ENCODE measurements at regions of chr1 and their contacts with region 1.

Region 1: GRCh38 chr1:23691499-23692307 is at the start of gene RPL11:
- DNase-seq: peak; percentile 84 to 88
- H3K4me3 ChIP-seq: peak within 1 kb of the TSS; percentile 82 to 100 (median 92)
- H3K27ac ChIP-seq: peak within 1 kb of the TSS; percentile 93
- H3K4me1 ChIP-seq: peaks cover 0 to 13% (median 6%) of the 10 kb centered on the region in 4 experiments; a peak in 4 of 7 replicates
- H3K27me3 ChIP-seq: no peaks in the 10 kb centered on the region
- CTCF ChIP-seq: peak; percentile 67 to 77 (median 76)
- EP300 ChIP-seq: no peak
- POLR2A ChIP-seq: peak; percentile 97 to 99
- RAD21 ChIP-seq: no peak
- total RNA-seq, gene RPL11: 1,426 and 1,499 TPM in 2 replicates

Region 2: DNA sequence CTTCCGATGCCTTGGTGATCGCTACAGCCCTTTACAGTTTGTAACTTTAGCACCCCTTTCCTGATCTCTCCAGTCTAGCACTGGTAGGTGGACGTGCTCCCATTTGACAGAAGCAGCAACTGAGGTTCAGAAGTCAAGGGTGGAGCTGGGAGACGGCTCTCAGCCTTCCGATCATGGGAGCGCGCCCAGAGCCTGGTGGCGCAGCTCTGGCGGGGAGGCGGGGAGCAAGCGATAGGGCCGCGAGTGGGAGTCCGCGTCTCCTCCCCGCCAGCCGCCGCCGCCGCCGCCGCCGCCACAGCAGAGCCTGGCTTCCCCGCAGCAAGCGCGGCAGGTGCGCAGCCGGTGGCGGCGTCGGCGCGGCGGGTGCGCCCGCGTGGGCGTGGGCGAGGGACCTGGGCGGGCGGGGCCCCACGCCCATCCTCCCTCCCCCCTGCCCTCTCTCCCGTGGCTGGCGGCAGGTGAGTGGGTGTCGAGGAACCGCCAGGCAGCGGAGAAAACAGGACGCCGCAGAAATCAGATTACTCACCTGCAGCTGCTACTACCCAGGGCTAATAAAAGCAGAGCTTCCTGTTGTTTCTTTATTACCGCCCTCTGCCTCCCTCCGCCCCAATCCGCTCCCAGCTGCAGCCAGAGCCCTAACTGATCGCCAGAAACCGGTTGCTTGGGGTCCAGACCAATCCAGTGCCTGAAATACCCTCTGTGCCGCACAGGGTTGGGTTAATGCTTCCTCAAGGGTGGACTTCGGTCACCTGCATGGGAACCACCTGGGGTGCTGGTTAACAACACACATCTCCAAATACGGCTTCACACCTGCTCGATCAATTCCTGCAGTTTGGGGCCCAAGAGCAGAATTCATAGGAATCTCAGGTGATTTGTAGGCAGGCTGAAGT is 72.2 kb before region 1 on chr1:
- CTCF ChIA-PET with region 1: interaction called, 3 read pairs
- POLR2A ChIA-PET with region 1: interaction called, 10 read pairs
- DNase-seq: peak in 1 of 2 experiments; percentile 72
- H3K4me3 ChIP-seq: peak overlapping the region; percentile 6 to 55 (median 28)
- H3K27ac ChIP-seq: no peak overlapping the region
- H3K4me1 ChIP-seq: peaks cover 4 to 17% (median 9%) of the 10 kb centered on the region in 4 experiments; a peak in 6 of 7 replicates
- H3K27me3 ChIP-seq: peaks cover 0 to 19% (median 13%) of the 10 kb centered on the region in 4 experiments; a peak in 5 of 7 replicates
- CTCF ChIP-seq: no peak
- EP300 ChIP-seq: no peak
- POLR2A ChIP-seq: no peak
- RAD21 ChIP-seq: no peak

Region 3: DNA sequence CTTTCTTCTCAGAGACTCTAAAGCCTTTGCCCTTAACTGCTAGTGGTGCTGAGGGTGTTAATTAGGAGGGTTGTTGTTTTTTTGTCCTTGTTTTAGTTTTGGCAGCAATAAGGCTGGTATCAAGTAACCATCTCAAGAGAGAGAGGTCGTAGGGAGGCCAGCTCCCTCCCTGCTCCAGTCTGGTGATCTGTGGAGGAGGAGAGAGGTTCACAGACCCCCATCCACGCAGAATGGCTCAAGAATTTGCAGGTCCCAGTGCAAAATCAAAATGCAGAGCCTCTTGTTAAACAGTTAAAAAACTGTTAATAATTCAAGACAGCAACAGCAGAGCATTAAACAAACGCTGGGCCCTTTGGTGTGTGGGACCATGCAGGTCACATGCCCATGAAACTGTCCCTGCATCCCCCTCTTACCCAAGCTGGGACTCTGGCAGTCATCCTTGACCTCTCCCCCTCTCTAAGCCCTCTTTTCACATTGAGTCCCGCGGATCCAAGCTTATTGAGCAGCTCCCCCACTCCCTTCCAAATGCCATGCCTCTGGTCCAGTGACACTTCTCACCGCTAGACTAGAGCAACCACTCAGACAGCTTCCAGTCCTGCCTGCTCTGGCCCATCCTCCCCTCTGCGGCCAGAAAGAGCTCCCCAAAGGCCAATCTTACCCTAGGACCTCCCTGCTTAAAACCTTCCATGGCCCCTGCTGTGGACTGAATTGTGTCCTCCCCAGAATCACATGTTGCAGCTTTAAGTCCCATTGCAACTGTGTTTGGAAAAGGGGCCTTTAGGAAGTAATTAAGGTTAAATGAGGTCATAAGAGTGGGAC is 47.8 kb before region 1 on chr1:
- CTCF ChIA-PET with region 1: no interaction called
- POLR2A ChIA-PET with region 1: interaction called, 10 read pairs
- DNase-seq: no peak
- H3K4me3 ChIP-seq: no peak overlapping the region
- H3K27ac ChIP-seq: no peak overlapping the region
- H3K4me1 ChIP-seq: peaks cover 0 to 4% (median 2%) of the 10 kb centered on the region in 4 experiments; a peak in 3 of 7 replicates
- H3K27me3 ChIP-seq: peaks cover 0 to 2% (median 0%) of the 10 kb centered on the region in 4 experiments; a peak in 2 of 7 replicates
- CTCF ChIP-seq: no peak
- EP300 ChIP-seq: no peak
- POLR2A ChIP-seq: no peak
- RAD21 ChIP-seq: no peak

Region 4: GRCh38 chr1:23709229-23709628 is 17.5 kb after region 1 on chr1:
- CTCF ChIA-PET with region 1: interaction called, 4 read pairs
- POLR2A ChIA-PET with region 1: interaction called, 179 read pairs
- DNase-seq: no peak
- H3K4me3 ChIP-seq: no peak overlapping the region
- H3K27ac ChIP-seq: no peak overlapping the region
- H3K4me1 ChIP-seq: no peaks in the 10 kb centered on the region
- H3K27me3 ChIP-seq: no peaks in the 10 kb centered on the region
- CTCF ChIP-seq: no peak
- EP300 ChIP-seq: no peak
- POLR2A ChIP-seq: no peak
- RAD21 ChIP-seq: no peak

Region 5: DNA sequence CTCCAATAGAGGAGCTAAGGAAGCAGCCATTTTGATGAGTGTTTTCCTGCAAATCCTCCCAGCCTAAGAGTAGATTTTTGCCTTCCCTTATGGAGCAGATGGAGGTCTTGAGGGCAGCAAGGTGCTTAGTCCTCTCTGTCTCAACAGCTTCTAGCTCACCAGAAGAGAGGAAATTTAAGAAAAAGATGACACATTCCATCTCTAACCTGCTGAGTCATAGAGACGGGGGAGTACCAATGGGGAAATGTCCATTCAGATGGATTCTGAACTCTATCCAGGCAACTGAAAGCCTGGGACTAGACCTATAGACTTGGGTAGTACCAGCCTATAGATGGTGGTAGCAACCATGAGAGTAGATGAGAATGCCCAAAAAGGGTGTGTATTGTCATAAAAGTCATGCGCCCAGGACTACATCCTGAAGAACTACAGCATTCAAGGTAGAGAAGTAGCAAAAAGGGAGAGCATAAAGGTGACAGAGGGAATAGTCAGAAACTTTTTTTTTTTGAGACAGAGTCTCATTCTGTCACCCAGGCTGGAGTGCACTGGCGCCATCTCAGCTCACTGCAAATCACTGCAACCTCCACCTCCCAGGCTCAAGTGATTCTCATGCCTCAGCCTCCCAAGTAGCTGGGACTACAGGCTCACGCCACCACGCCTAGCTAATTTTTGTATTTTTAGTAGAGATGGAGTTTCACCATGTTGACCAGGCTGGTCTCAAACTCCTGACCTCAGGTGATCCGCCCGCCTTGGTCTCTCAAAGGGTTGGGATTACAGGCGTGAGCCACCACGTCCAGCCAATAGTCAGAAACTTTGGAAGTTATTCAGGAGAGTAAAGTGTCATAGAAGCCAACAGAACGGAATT is 40.9 kb after region 1 on chr1:
- CTCF ChIA-PET with region 1: interaction called, 3 read pairs
- POLR2A ChIA-PET with region 1: interaction called, 190 read pairs
- DNase-seq: no peak
- H3K4me3 ChIP-seq: no peak overlapping the region
- H3K27ac ChIP-seq: no peak overlapping the region
- H3K4me1 ChIP-seq: no peaks in the 10 kb centered on the region
- H3K27me3 ChIP-seq: no peaks in the 10 kb centered on the region
- CTCF ChIP-seq: no peak
- EP300 ChIP-seq: no peak
- POLR2A ChIP-seq: no peak
- RAD21 ChIP-seq: no peak

Region 6: DNA sequence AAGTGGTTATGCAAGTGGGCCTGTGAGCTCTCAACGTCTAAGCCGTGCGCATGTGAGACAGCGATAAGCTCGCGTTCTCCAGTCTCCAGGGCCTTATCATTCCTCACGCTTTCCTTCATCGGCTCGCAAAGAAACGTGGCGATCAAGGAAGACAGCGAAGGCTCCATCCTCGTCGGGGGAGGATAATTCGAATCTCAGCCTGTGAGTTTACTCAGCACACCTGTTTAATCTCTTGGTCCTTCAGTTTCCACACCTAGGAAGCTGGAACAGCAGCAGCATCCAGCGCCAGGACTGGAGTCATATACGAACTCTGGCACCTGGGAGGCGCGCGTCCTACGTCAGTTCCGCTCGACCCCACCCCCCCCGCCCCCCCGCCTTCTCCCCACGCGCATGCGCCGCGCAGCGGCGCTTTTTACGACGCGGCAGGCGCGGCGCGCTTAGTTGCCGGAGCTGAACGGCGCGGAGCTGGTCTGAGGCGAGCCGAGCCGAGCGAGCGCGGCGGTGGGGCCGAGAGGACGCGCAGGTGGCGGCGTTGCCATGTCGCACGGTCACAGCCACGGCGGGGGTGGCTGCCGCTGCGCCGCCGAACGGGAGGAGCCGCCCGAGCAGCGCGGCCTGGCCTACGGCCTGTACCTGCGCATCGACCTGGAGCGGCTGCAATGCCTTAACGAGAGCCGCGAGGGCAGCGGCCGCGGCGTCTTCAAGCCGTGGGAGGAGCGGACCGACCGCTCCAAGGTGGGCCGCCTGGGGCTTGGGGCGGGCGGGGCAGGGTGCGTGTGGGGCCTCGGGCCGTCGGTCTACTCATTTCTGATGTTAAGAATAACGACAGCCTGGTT is 86.5 kb after region 1 on chr1 and contains the start of gene PITHD1:
- CTCF ChIA-PET with region 1: no interaction called
- POLR2A ChIA-PET with region 1: interaction called, 20 read pairs
- DNase-seq: peak in 1 of 2 experiments; percentile 77
- H3K4me3 ChIP-seq: peak within 1 kb of the TSS; percentile 83 to 99 (median 91)
- H3K27ac ChIP-seq: peak within 1 kb of the TSS; percentile 75
- H3K4me1 ChIP-seq: peaks cover 0 to 5% (median 3%) of the 10 kb centered on the region in 4 experiments; a peak in 3 of 7 replicates
- H3K27me3 ChIP-seq: no peaks in the 10 kb centered on the region
- CTCF ChIP-seq: no peak
- EP300 ChIP-seq: no peak
- POLR2A ChIP-seq: peak in 1 of 2 experiments; percentile 79; a peak in 2 of 3 replicates
- RAD21 ChIP-seq: no peak
- total RNA-seq, gene PITHD1: 65.0 and 68.8 TPM in 2 replicates